HEK293 (cell line): ENCODE measurements at regions of chrX and their contacts with region 1.

Region 1: GRCh38 chrX:23901805-23902204 is 5.9 kb downstream of the APOO start:
- H3K4me3 ChIP-seq: no peak overlapping the region
- H3K27ac ChIP-seq: no peak overlapping the region
- H3K4me1 ChIP-seq: peaks cover 18% of the 10 kb centered on the region
- CTCF ChIP-seq: no peak; the same call in 1 of the 2 replicates

Region 2: DNA sequence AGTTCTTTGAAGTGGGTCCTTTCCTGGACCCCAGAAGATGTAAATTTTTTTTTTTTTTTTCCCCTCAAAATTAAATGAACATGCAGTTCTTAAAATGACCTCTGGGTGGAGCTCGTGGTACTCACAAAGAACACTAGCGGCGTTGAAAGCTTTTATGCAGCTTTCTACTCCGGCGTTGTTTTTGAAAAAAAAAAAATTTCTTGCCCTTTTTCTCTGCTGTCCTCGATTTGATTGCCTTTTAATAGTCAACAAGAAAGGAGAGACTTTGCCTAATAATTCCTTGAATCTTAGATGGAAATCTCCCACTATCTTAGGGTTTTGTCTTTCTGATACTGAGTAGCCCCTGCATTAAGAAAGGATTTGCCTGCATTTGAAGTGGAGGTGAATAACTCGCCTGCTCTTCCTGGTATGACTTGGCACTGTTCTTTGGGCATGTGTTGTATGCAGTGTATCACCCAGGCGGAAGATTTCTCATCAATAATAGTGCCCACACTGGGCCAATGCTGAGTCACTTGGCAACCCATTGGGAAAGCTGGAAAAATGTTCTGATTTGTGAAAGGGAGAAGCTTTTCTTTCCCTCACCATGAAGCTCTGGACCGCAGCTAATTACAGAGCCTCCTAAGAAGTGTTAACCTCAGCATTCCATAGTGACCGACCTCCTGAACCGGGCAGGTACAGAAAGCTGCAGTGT is 1765.7 kb before region 1 on chrX:
- CTCF ChIA-PET with region 1: interaction called, 11 read pairs
- POLR2A ChIA-PET with region 1: no interaction called
- H3K4me3 ChIP-seq: no peak overlapping the region
- H3K27ac ChIP-seq: no peak overlapping the region; the same call in 1 of the 2 replicates
- H3K4me1 ChIP-seq: no peaks in the 10 kb centered on the region
- CTCF ChIP-seq: no peak

Region 3: GRCh38 chrX:23704673-23705206 is 197.1 kb before region 1 on chrX:
- CTCF ChIA-PET with region 1: interaction called, 130 read pairs
- POLR2A ChIA-PET with region 1: no interaction called
- H3K4me3 ChIP-seq: no peak overlapping the region
- H3K27ac ChIP-seq: no peak overlapping the region
- H3K4me1 ChIP-seq: no peaks in the 10 kb centered on the region
- CTCF ChIP-seq: no peak

Region 4: DNA sequence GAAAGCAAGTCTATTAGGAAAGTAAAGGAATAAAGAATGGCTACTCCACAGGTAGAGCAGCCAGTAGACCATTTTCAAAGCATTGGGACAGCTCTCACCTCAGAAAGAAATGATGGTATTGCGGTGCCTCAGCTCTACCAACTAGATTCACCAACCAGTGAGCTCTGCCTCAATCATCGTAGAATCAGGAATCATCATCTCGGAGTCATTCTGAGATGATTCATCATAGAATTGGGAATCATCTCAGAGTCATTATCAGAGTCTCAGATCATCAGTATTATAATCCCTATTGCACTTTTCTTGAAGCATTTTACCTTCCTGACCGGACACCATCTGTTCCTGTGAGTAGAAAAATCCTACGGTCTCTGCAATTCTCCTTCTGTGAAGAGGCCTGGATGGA is 136.4 kb before region 1 on chrX:
- CTCF ChIA-PET with region 1: interaction called, 10 read pairs
- POLR2A ChIA-PET with region 1: no interaction called
- H3K4me3 ChIP-seq: no peak overlapping the region
- H3K27ac ChIP-seq: no peak overlapping the region
- H3K4me1 ChIP-seq: no peaks in the 10 kb centered on the region
- CTCF ChIP-seq: no peak

Region 5: DNA sequence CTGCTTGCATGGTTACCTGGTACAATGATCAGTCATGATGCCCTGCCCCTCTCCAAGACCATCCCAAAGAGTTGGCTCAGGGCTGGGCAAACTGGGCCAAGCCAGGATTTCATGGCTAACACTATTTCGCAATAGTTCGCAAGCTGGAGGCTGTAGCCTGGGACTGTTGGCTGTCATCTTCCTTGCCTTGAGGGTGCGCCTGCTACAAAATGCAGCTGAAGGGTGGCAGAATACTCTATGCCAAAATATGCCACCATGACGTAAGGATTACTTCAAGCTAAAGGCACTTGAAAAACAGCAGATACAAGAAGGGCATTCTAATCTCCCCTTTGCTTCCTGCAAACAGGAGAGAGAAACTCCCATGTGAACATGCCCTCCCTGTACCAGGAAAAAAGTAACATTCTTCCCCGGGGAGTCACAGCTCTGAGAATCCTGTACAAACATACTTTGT is 97.8 kb before region 1 on chrX:
- CTCF ChIA-PET with region 1: interaction called, 10 read pairs
- POLR2A ChIA-PET with region 1: interaction called, 8 read pairs
- H3K4me3 ChIP-seq: no peak overlapping the region
- H3K27ac ChIP-seq: no peak overlapping the region
- H3K4me1 ChIP-seq: peaks cover 13% of the 10 kb centered on the region
- CTCF ChIP-seq: no peak

Region 6: DNA sequence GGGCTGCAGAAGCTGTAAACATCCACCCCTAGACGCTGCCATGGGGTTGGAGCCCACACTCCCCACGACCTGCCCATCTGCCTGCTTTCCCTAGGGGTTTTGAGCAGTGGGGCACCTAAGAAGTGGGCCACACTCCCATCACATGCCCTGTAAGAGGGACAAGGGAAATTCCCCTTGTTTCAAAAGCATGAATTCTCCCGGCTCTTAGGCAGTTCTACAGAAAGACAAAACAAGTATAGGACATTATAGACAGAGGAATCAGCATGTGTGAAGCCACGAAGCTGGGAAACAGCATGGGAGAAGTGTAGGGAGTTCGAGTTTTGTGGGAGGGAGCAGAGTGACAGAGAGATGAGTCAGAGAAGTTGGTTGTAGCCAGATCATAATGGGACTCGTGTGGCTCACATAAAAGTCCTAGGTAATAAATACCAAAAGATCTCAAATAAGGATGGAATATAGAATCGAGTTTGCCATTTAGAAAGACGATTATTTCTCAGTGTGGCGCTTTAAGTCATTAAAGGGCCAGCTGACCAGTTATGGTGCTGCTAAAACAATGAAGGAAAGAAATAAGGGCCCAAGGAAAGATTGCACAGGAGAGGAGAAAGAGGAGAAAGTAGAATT is 18.0 kb before region 1 on chrX:
- CTCF ChIA-PET with region 1: interaction called, 20 read pairs
- POLR2A ChIA-PET with region 1: interaction called, 7 read pairs
- H3K4me3 ChIP-seq: no peak overlapping the region
- H3K27ac ChIP-seq: 0 out of 2 replicates have a peak overlapping the region, but pooled peaks have one; percentile 42
- H3K4me1 ChIP-seq: peaks cover 16% of the 10 kb centered on the region
- CTCF ChIP-seq: no peak

Region 7: GRCh38 chrX:23993012-23993633 is 91.3 kb after region 1 on chrX:
- CTCF ChIA-PET with region 1: no interaction called
- POLR2A ChIA-PET with region 1: no interaction called
- H3K4me3 ChIP-seq: no peak overlapping the region
- H3K27ac ChIP-seq: no peak overlapping the region
- H3K4me1 ChIP-seq: no peaks in the 10 kb centered on the region
- CTCF ChIP-seq: no peak

Region 8: DNA sequence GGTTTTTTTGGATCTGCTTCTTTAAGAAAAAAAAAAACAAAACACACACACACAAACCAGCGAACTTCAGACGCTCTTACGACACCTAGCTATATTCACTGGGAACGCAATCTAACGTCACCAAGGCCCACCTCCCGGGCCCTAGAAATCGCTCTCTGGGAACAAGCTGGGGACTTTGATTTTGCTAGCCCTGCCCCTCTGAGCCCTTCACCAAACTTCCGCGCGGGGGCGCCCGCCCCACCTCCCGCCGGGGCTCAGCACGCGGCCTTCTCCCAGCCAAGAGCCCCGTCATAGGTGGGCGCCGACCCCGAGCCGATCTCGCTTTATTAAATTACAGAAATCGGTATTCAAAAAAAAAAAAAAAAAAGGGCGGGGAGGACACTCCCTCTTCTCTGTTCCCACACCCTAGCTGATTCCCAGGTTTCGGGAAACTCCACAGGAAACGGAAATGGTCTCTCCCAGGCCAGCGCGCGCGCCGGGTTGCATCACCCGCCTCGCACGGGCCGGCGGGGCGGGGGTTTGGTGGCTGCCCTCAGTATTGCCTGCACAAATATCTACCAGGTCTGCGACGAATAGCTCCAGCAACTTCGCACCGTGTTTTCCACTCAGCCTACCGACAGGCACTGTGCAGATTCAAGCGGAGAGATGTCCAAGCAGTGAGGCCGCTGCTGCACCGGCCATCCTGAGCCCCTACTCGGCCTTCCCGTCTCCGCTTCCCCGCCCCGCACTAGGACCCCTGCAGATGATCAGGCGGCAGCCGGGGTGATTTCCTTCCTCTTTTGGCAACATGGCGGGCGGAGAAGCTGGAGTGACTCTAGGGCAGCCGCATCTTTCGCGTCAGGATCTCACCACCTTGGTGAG is 152.6 kb after region 1 on chrX and contains the start of gene EIF2S3:
- CTCF ChIA-PET with region 1: interaction called, 16 read pairs
- POLR2A ChIA-PET with region 1: interaction called, 3 read pairs
- H3K4me3 ChIP-seq: peak within 1 kb of the TSS; percentile 39
- H3K27ac ChIP-seq: peak within 1 kb of the TSS; percentile 98
- H3K4me1 ChIP-seq: no peaks in the 10 kb centered on the region
- CTCF ChIP-seq: peak; percentile 88